IMR-90 (cell line): ENCODE measurements at regions of chr3 and their contacts with region 1.

Region 1: GRCh38 chr3:184604039-184604601 is 42.5 kb downstream of the EPHB3 start:
- DNase-seq: no peak
- ATAC-seq: peak; percentile 65
- H3K4me3 ChIP-seq: peak overlapping the region; percentile 9; the same call in 1 of the 2 replicates
- H3K27ac ChIP-seq: no peak overlapping the region
- H3K4me1 ChIP-seq: no peaks in the 10 kb centered on the region; the same call in 1 of the 2 replicates
- H3K27me3 ChIP-seq: peaks cover 66% of the 10 kb centered on the region
- CTCF ChIP-seq: no peak
- POLR2A ChIP-seq: no peak
- RAD21 ChIP-seq: no peak

Region 2: GRCh38 chr3:184636741-184637316 is 32.7 kb after region 1 on chr3:
- CTCF ChIA-PET with region 1: no interaction called
- POLR2A ChIA-PET with region 1: no interaction called
- dilution Hi-C with region 1: no loop called
- in situ Hi-C with region 1: no loop called
- intact Hi-C with region 1: loop called (anchors 1 kb)
- DNase-seq: peak; percentile 77
- ATAC-seq: peak; percentile 90
- H3K4me3 ChIP-seq: no peak overlapping the region
- H3K27ac ChIP-seq: 0 out of 2 replicates have a peak overlapping the region, but pooled peaks have one; percentile 1
- H3K4me1 ChIP-seq: peaks cover 15% of the 10 kb centered on the region
- H3K27me3 ChIP-seq: peaks cover 22% of the 10 kb centered on the region
- CTCF ChIP-seq: no peak
- POLR2A ChIP-seq: no peak
- RAD21 ChIP-seq: no peak

Region 3: DNA sequence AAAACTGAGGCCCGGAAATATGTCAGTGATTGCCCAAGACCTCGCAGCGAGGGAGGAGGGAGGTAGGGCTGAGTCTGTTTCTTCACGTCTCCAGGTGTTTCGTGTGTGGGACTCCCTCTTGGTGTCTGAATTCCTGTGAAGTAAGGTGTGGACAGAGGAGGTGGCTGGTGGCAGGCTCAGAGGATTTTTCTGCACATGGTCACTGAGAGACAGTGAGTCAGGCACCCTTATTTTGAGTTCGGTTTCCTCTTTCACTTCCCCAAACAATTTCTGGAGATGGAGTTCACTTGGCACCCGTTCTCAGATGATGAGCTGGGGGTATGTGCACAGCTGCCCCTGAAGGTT is 161.6 kb after region 1 on chr3:
- CTCF ChIA-PET with region 1: no interaction called
- POLR2A ChIA-PET with region 1: no interaction called
- dilution Hi-C with region 1: no loop called
- in situ Hi-C with region 1: no loop called
- intact Hi-C with region 1: no loop called
- DNase-seq: peak; percentile 74
- ATAC-seq: peak; percentile 22
- H3K4me3 ChIP-seq: no peak overlapping the region
- H3K27ac ChIP-seq: peak overlapping the region; percentile 10; the same call in 1 of the 2 replicates
- H3K4me1 ChIP-seq: peaks cover 29% of the 10 kb centered on the region
- H3K27me3 ChIP-seq: no peaks in the 10 kb centered on the region
- CTCF ChIP-seq: no peak
- POLR2A ChIP-seq: no peak
- RAD21 ChIP-seq: no peak